ENCODE measurements at regions of chr10 and their contacts with region 1.

Region 1: DNA sequence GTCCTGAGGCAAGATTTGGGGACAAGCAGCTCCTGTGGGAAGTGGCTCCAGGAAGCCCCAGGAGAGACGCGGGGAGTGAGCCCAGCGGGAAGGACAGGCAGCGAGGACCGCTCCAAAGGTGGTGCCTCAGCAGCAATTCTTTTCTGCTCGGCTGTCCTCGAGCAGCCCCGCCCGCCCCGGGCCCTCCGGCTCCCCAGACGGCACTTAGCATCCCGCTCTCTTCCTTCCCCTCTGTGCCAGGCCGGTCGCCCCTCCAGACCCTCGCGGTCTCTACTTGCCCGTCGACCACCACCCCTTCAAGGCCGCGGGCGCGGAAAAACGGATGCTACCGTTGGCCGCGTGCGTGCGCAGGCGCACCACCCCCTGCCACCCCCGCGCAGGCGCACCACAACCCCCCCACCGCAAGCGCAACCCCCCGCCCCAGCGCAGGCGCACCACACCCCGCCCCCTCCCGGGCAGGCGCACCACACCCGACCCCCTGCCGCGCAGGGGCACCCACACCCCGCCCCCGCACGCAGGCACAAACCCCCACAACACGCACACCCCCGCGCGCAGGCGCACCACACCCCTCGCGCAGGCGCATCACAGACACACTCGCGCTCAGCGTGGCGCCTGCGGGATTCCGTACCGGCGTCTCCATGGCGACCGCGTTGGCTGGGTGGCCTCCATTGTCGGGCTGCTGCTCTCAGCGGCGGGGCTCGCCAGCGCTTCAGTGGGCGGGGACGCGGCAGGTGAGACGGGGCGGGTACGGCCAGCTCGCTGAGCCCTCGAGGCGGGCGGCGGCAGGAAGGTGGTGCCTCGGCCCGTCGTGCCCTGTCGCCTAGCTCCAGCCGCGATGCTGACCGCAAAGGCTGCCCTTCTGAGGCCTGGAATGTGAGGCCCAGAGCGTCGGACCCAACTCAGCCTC is at the start of gene LRRC27:
- DNase-seq: peak; percentile 100
- ATAC-seq: peak; percentile 80
- H3K4me3 Mint-ChIP-seq: peak within 1 kb of the TSS; percentile 94
- H3K27ac Mint-ChIP-seq: peak within 1 kb of the TSS; percentile 98
- H3K4me1 Mint-ChIP-seq: peaks cover 81% of the 10 kb centered on the region
- H3K27me3 Mint-ChIP-seq: no peaks in the 10 kb centered on the region
- CTCF ChIP-seq: no peak
- total RNA-seq, gene LRRC27: 9.1 and 15.2 TPM in 2 replicates

Region 2: GRCh38 chr10:131981429-131982184 is 350.2 kb before region 1 on chr10 and contains the start of gene BNIP3:
- CTCF ChIA-PET with region 1: no interaction called
- POLR2A ChIA-PET with region 1: no interaction called
- intact Hi-C with region 1: loop called (anchors 2 kb)
- DNase-seq: peak; percentile 98
- ATAC-seq: peak; percentile 90
- H3K4me3 Mint-ChIP-seq: peak within 1 kb of the TSS; percentile 87
- H3K27ac Mint-ChIP-seq: peak within 1 kb of the TSS; percentile 35
- H3K4me1 Mint-ChIP-seq: peaks cover 10% of the 10 kb centered on the region
- H3K27me3 Mint-ChIP-seq: peaks cover 2% of the 10 kb centered on the region
- CTCF ChIP-seq: no peak
- total RNA-seq, gene BNIP3: 9.9 and 10.6 TPM in 2 replicates

Region 3: GRCh38 chr10:132319853-132320669 is 11.7 kb before region 1 on chr10:
- CTCF ChIA-PET with region 1: no interaction called
- POLR2A ChIA-PET with region 1: interaction called, 4 read pairs
- intact Hi-C with region 1: loop called (anchors 1 kb)
- DNase-seq: no peak
- ATAC-seq: peak; percentile 93
- H3K4me3 Mint-ChIP-seq: no peak overlapping the region
- H3K27ac Mint-ChIP-seq: peak overlapping the region; percentile 50
- H3K4me1 Mint-ChIP-seq: peaks cover 10% of the 10 kb centered on the region
- H3K27me3 Mint-ChIP-seq: no peaks in the 10 kb centered on the region
- CTCF ChIP-seq: no peak

Region 4: DNA sequence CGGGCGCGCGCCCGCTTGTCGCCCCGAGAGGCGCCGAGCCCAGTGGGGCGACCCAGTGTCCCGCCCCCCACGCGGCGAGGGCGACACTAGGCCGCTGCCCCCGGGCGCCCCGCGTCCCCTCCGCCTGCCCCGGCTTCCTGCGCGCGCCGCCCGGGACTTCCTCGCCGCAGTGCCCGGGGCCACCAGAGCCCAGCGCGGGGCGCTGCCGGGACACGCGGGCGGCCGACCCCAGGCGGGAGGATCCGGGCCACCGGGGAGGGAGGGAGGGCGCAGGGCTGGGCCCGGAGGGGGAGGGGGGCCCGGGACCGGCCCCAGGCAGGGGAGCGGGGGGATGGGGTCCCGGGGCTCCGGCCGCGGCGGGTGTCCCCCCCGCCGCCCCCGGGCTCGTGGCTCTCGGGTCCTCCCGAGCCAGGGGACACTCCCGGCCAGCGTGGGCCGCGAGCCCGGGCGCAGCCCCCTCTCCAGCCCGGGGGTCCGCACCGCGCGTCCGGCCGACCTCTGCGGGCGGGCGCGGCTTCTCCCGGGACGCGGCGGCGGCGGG is 64.8 kb after region 1 on chr10:
- CTCF ChIA-PET with region 1: no interaction called
- POLR2A ChIA-PET with region 1: interaction called, 4 read pairs
- intact Hi-C with region 1: loop called (anchors 1 kb)
- DNase-seq: peak; percentile 74
- ATAC-seq: peak; percentile 71
- H3K4me3 Mint-ChIP-seq: no peak overlapping the region
- H3K27ac Mint-ChIP-seq: no peak overlapping the region
- H3K4me1 Mint-ChIP-seq: peaks cover 59% of the 10 kb centered on the region
- H3K27me3 Mint-ChIP-seq: no peaks in the 10 kb centered on the region
- CTCF ChIP-seq: no peak

Region 5: DNA sequence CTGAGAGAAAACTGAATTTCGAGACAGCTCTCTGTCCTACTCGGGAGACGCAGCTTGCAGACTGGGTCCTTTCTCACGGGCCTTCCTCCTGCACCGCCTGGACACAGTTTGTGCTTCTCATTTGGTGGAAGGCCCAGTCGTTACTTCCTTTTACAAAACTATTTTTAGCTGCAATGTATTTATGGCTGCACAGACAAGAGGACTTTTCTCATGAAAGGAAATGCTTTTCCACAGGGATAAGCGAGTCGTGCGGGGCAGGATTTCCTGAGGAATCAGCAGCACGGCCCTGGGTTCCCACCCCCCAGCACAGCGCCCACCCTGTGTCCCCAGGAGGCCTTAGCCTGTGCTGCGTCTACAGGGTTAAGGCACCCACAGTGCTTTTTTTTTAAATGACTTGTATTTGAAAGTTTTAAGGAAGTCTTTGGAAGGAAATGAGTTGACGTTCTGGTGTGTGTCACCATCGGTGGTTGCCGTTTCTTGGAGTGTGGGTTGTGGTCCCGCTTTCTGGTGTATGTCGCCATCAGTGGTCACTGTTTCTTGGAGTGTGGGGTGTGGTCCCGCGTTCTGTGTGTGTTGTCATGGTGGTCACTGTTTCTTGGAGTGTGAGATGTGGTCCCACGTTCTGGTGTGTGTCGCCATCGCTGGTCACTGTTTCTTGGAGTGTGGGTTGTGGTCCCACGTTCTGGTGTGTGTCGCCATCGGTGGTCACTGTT is 256.7 kb after region 1 on chr10:
- CTCF ChIA-PET with region 1: no interaction called
- POLR2A ChIA-PET with region 1: no interaction called
- intact Hi-C with region 1: loop called (anchors 5 kb)
- DNase-seq: peak; percentile 39
- ATAC-seq: peak; percentile 65
- H3K4me3 Mint-ChIP-seq: peak overlapping the region; percentile 77
- H3K27ac Mint-ChIP-seq: peak overlapping the region; percentile 78
- H3K4me1 Mint-ChIP-seq: peaks cover 75% of the 10 kb centered on the region
- H3K27me3 Mint-ChIP-seq: no peaks in the 10 kb centered on the region
- CTCF ChIP-seq: no peak

Measured in activated B cell treated with CpG ODN at 0.5 μM for 24 hours (primary cell).